ENCODE measurements at regions of chr18 and their contacts with region 1.

Region 1: DNA sequence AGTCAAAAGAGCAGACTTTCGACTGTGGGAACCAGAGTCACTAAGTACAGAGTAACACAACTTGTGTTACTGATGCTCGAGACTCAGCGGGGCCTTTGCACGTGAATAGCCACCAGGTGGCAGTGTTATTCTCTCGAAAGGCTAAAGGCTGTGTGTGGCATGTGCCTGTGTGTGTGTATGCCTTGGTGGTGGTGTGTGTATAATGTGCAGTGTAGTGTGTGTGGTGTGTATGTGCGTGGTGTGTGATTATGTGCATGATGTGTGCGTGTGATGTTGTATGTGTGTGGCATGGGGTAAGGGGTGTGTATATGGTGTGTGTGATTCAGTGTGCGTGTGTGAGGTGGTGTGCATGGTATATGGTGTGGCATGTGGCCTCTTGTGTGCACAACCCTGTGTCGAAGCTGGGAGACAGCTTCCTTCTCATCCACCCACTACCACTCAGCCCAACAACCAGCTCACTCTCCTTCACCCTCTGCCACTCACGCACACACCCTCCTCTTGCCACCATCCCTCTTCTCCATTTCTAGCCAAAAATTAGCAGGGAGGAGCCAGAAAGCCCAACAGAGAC is 83.0 kb upstream of the ZNF532 start:
- DNase-seq: peak; percentile 75 to 77
- ATAC-seq: peak; percentile 87 to 90 (median 88)
- H3K4me3 ChIP-seq: no peak overlapping the region
- H3K27ac ChIP-seq: no peak overlapping the region
- H3K4me1 ChIP-seq: peaks cover 11% of the 10 kb centered on the region
- H3K27me3 ChIP-seq: no peaks in the 10 kb centered on the region
- CTCF ChIP-seq: peak; percentile 92

Region 2: GRCh38 chr18:57446322-57446721 is 1335.4 kb before region 1 on chr18:
- intact Hi-C with region 1: no loop called
- DNase-seq: no peak
- ATAC-seq: peak in 1 of 4 donors; percentile 57
- H3K4me3 ChIP-seq: no peak overlapping the region
- H3K27ac ChIP-seq: no peak overlapping the region
- H3K4me1 ChIP-seq: no peaks in the 10 kb centered on the region
- H3K27me3 ChIP-seq: peaks cover 0 to 64% (median 7%) of the 10 kb centered on the region in 3 donors
- CTCF ChIP-seq: peak; percentile 34

Region 3: DNA sequence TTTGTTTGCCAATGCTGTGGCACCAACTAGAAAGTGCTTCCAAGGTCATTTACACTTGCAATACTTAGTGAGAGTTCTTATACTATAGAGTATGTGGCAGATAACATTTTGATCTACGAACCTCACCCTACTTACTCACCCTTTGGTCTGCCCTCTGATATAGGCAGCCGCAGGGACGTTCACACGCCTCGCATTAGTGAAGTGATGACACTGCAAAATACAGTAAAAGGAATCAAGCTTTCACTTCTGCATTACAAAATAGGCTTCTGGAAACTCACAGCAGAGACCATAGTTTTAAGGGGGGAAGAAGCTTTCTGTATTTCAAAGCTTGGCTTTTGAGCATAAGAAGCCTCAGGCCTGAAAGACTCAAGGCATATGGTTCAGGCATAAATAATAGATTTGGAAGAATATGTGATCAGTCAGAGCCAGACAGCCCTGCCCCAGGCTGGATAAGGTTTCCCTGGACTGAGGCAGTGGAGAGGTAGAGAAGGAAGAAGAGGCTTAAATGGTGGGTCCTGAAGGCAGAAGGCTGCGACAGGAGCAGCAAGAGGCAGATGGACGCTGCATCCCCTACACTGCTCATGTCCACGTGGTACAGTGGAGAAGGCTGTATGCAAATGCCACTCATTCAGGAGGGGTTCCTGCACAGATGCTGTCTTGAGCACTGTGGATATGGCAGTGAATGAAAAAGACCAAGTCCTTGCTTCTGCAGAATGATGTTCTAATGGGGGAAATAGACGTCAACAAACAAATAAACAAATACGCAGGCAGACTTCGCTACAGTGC is 1258.3 kb before region 1 on chr18:
- intact Hi-C with region 1: no loop called
- DNase-seq: no peak
- ATAC-seq: no peak
- H3K4me3 ChIP-seq: no peak overlapping the region
- H3K27ac ChIP-seq: no peak overlapping the region
- H3K4me1 ChIP-seq: no peaks in the 10 kb centered on the region
- H3K27me3 ChIP-seq: peaks cover 0 to 2% (median 1%) of the 10 kb centered on the region in 3 donors
- CTCF ChIP-seq: no peak

Region 4: GRCh38 chr18:58864146-58865032 is 82.7 kb after region 1 on chr18 and contains the start of gene ZNF532:
- intact Hi-C with region 1: loop called in 1 of 2 experiments (anchors 5 kb)
- DNase-seq: no peak
- ATAC-seq: peak; percentile 24 to 51 (median 32)
- H3K4me3 ChIP-seq: peak within 1 kb of the TSS; percentile 73
- H3K27ac ChIP-seq: peak within 1 kb of the TSS; percentile 99
- H3K4me1 ChIP-seq: peaks cover 76% of the 10 kb centered on the region
- H3K27me3 ChIP-seq: no peaks in the 10 kb centered on the region
- CTCF ChIP-seq: no peak
- total RNA-seq, gene ZNF532: 68.8 to 105 (median 84.7) TPM

Region 5: DNA sequence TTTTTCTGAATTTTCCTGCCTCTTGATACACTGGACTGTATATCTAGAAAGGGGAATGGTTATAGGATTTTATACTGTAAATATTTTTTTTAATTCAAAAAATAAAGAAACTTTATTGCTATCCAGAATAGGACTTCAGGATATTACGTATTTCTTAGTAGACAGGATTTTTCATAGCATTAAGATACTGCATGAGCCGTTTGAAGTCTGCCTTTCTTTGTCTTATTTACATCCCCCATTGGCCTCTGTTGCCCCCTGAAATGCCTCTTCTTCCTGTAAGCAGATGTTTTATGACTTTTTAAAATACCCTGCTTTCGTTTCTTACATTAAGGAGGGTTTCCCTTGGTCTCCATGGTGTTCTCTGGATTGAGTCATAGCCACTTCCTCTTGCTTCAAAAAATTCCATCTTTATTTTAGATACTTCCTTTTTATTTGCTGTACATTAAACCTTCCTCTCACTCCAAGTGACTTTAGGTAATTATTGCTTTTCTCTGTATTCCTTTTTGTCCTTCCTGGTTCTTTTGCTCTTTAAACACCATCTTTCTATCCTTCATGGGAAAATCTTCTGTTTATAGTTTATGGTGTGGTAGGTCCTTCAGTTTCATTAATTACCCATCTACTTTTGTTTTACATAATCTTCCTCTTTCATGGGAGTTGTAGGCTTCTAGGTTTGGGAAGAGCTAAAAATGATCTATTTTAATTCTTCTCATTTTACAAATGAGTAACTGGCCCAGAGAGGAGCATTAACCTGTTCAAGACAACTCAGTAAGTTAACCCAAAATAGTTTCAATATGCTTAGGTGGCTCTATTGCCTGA is 155.6 kb after region 1 on chr18:
- intact Hi-C with region 1: loop called in 1 of 2 experiments (anchors 10 kb)
- DNase-seq: no peak
- ATAC-seq: peak in 2 of 4 donors; percentile 19
- H3K4me3 ChIP-seq: no peak overlapping the region
- H3K27ac ChIP-seq: peak overlapping the region; percentile 50
- H3K4me1 ChIP-seq: peaks cover 22% of the 10 kb centered on the region
- H3K27me3 ChIP-seq: no peaks in the 10 kb centered on the region
- CTCF ChIP-seq: no peak

Region 6: DNA sequence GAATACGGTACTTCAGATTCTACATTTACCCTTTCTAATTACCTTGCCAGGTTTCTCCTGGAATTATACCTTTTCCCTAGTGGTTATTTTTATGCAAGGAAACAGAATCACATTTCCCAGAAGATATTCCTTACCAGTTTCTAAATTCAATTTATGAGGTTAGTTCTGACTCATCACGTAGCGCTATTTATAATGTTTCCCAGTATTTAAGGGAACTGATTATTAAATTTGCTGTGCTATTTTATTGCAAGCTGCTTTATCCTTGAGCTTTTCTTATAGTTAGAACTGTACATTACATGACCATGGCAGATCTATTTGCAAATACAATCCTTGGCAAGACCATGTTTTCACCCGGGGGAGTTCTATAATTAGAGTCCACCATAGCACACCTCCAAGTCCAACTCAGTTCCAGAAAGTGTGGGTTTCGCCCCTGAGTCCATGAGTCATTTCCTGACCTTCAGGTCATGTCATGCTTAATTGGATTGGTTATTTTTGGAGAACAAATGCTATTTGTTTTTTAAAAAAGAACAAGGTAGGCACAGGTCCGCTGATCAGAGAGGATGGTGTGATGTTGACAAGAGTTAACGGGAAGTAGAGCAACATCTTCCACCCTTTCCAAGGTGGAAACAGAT is 209.6 kb after region 1 on chr18:
- intact Hi-C with region 1: loop called in 1 of 2 experiments (anchors 5 kb)
- DNase-seq: no peak
- ATAC-seq: peak; percentile 80 to 86 (median 82)
- H3K4me3 ChIP-seq: no peak overlapping the region
- H3K27ac ChIP-seq: peak overlapping the region; percentile 90
- H3K4me1 ChIP-seq: peaks cover 58% of the 10 kb centered on the region
- H3K27me3 ChIP-seq: no peaks in the 10 kb centered on the region
- CTCF ChIP-seq: peak; percentile 23

Region 7: GRCh38 chr18:59056706-59057492 is 275.2 kb after region 1 on chr18:
- intact Hi-C with region 1: loop called in 1 of 2 experiments (anchors 1 kb)
- DNase-seq: peak; percentile 73 to 85
- ATAC-seq: peak; percentile 74 to 80 (median 79)
- H3K4me3 ChIP-seq: no peak overlapping the region
- H3K27ac ChIP-seq: no peak overlapping the region
- H3K4me1 ChIP-seq: peaks cover 21% of the 10 kb centered on the region
- H3K27me3 ChIP-seq: no peaks in the 10 kb centered on the region
- CTCF ChIP-seq: peak; percentile 88

Region 8: DNA sequence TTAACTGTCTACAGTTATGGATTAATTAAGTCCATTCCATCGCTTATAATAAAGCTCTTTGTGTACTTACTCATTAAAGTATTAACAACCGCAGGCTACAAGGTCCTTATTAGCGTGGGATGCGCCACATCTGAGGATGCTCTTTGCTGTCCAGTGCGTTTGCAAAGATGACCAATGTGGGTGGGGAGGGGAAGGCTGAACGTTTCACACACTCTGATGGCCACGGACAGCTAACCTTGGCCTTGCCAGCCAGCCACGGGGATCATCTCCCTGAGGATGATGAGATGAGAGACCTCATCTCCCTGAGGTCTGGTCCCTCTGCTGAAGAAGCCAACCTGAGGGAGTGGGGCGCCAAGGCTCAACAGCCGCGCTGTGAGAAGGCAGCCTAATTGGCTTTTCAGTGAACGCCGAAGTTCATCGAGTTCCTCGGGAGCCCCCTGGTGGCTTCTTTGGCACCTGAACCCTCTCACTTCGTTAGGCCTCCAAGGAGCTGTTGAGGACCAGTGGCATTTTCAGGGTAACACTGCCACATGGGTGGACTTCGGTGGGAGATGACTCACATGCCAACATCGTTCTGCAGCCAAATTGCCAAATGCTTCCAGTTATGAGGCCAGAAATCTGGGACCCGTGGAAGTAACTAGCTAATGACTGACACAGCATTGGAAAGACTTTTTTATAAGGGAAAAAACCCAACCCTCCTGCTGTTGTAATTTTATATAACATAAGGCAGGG is 288.6 kb after region 1 on chr18:
- intact Hi-C with region 1: loop called (anchors 1 to 2 kb)
- DNase-seq: peak; percentile 82 to 90
- ATAC-seq: peak; percentile 86 to 94 (median 88)
- H3K4me3 ChIP-seq: no peak overlapping the region
- H3K27ac ChIP-seq: no peak overlapping the region
- H3K4me1 ChIP-seq: no peaks in the 10 kb centered on the region
- H3K27me3 ChIP-seq: no peaks in the 10 kb centered on the region
- CTCF ChIP-seq: peak; percentile 90

Measured in psoas muscle (tissue), 8 donors.